Ascending aorta (tissue), 2 donors: ENCODE measurements at regions of chr14 and their contacts with region 1.

Region 1: DNA sequence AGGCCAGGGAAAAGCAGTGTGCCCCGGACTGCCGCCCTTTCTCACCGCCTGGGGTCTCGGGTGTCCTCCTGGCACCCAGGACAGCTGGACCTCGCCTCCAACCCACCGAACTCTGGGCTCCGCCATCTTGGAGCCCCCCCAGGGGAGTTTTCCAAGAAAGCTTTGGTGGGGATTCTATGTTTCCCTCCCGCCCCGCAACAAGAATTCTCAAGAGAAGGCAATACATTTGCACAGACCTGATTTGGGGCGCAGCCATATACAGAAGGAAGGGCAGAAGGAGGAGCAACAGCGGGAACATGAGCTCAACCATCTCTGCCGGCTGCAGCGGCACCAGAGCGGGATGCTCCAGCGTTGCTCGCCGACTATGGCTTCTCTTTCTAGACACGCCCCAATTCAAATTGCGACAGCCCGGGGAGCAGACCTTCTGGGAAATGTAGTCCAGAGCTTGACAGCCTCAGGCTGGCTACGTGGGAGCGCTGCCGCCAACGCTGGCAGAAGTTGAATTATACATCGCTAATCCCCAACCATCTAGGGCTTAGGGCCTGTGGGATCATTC is at the start of gene RDH11:
- DNase-seq: peak; percentile 70 to 94
- H3K4me3 ChIP-seq: peak within 1 kb of the TSS; percentile 68 to 88
- H3K27ac ChIP-seq: peak within 1 kb of the TSS; percentile 74 to 84
- H3K4me1 ChIP-seq: peaks cover 0 to 5% of the 10 kb centered on the region in 2 donors
- H3K27me3 ChIP-seq: no peaks in the 10 kb centered on the region
- CTCF ChIP-seq: no peak
- total RNA-seq, gene RDH11: 25.1 TPM

Region 2: DNA sequence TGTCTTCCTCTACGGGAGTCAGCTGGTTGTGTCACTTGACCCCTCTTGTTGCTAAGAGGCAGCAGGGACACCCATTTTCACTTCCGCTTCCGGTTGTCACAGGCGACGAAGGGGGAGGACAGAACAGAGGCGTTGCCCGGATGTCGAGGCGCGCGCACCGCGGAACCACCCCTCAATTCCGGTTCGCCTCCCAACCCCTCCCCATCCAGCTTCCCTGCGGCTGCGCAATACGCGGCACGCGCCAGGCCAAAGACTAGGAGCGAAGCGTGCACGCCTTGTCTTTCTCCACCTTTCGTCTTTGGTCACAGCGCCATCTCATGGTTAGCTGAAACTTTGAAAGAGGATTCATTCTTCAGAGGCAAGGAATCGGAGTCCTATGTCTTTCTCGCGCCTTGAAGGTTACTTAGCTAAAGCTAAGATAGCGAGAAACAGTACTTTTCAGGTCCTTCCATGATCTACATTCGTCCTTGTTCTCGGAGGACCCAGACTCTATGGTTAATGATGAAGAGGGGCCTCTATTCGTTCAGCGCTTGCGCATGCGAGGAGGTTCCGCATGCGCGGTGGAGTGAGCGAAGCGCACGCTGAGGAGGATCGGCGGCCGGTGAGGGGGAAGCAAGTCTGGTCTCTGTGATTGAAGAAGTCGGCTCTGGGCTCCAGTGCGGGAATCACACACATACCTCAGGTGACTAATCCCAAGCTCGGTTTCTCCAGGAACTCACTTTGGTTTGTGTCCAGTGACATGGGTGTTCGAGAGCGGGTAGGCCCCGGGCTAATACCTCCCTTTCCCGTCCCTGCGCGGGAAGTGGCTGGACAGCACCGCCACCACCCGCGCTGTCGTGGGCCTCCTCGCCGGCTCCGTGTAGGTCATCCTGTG is 335.5 kb before region 1 on chr14 and contains the starts of genes ATP6V1D and EIF2S1:
- intact Hi-C with region 1: loop called (anchors 10 kb)
- DNase-seq: peak; percentile 97 to 99
- H3K4me3 ChIP-seq: peak within 1 kb of the TSS; percentile 77 to 85
- H3K27ac ChIP-seq: peak within 1 kb of the TSS; percentile 87 to 95
- H3K4me1 ChIP-seq: peaks cover 6 to 35% of the 10 kb centered on the region in 2 donors
- H3K27me3 ChIP-seq: no peaks in the 10 kb centered on the region
- CTCF ChIP-seq: peak; percentile 97 to 99 (median 98)
- total RNA-seq, gene ATP6V1D: 27.6 TPM
- total RNA-seq, gene EIF2S1: 55.1 TPM

Region 3: DNA sequence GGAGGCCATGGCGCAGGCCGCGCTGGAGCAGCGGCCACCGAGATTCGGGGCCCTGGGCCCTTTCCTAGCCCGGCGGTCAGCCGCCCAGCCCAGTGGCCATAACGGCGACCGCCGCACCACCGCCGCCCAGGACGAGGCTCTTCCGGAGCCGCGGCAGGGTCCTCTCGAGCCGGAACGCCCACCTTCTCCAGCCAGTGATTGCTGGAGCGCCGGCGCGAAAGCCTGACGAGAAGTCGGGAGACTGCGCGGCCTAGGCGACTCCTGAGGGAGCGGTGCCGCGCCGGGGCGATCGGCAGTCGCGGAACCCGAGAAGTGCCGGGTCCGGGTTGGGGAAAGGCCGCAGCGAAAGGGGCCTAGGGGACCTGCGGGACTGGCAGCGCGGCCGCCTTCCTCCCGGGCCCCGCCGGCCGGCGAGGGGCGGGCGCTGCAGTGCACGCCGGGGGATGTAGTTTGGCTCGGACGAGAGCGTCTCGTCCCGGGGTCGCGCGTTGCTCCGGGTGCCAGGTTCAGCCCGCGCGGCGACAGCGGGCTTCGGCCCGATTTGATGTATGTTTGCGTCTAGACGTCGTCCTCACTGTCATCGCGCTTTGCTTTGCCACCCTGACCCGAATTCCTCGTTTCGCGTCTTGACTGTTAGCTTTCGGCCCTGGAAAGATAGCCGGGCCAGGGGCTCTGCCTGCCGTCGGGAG is 20.8 kb before region 1 on chr14 and contains the start of gene VTI1B:
- intact Hi-C with region 1: loop called (anchors 2 kb)
- DNase-seq: peak in 1 of 2 donors; percentile 84
- H3K4me3 ChIP-seq: peak within 1 kb of the TSS; percentile 86 to 97
- H3K27ac ChIP-seq: peak within 1 kb of the TSS; percentile 96 to 100
- H3K4me1 ChIP-seq: peaks cover 3 to 25% of the 10 kb centered on the region in 2 donors
- H3K27me3 ChIP-seq: no peaks in the 10 kb centered on the region
- CTCF ChIP-seq: peak in 1 of 3 experiments; percentile 8
- total RNA-seq, gene VTI1B: 43.2 TPM

Region 4: GRCh38 chr14:67787673-67788072 is 92.2 kb after region 1 on chr14:
- intact Hi-C with region 1: no loop called
- DNase-seq: no peak
- H3K4me3 ChIP-seq: no peak overlapping the region
- H3K27ac ChIP-seq: no peak overlapping the region
- H3K4me1 ChIP-seq: no peaks in the 10 kb centered on the region
- H3K27me3 ChIP-seq: no peaks in the 10 kb centered on the region
- CTCF ChIP-seq: no peak